ENCODE measurements at regions of chr10 and their contacts with region 1.

Region 1: GRCh38 chr10:78756604-78757349 is 312.0 kb upstream of the ZMIZ1 start:
- DNase-seq: peak; percentile 100
- ATAC-seq: peak; percentile 98
- H3K4me3 ChIP-seq: peak overlapping the region; percentile 4; the same call in 1 of the 2 replicates
- H3K27ac ChIP-seq: peak overlapping the region; percentile 73
- H3K4me1 ChIP-seq: peaks cover 28% of the 10 kb centered on the region
- H3K27me3 ChIP-seq: no peaks in the 10 kb centered on the region
- CTCF ChIP-seq: peak; percentile 39; the same call in 1 of the 2 replicates

Region 2: DNA sequence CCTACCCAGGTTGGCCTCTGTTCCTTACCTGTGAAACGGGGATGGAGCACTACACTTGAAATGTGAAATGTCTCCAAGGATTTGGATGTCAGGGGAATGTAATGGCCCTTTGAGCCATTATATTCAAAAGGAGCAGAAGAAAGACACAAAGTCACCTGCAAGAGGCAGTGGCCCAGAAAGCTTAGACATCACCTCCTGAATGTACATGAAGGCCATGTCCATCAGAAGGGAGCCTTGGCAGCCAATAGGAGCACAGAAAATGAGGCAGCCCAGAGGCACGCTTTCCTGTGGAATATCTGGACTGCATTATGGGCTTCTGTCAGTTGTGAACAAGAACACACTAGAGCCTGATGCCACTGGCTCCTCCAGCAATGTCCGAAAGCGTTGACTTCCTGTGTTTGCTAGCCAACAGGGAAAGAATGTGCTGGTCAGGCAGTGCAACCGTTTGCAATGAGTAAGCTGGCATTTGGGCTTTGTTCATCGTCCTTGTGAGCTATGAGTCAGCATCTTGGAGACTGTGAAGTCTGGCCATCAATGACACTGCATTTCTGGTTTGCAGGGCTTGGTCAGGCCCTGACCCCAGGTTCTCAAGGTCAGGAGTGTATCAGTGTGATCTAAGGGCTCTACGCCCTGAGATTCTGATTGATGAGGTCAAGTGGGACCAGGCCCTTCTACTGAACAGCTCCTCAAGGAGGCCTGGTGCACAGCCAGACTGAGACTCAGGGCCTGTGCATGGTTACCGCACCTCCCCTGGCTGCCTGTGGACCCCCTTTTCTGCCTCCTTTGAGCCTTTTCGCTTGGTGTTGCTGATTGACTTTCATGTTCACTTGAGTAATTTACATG is 500.8 kb before region 1 on chr10:
- CTCF ChIA-PET with region 1: no interaction called
- POLR2A ChIA-PET with region 1: no interaction called
- intact Hi-C with region 1: loop called (anchors 10 kb)
- DNase-seq: peak; percentile 100
- ATAC-seq: peak; percentile 97
- H3K4me3 ChIP-seq: no peak overlapping the region
- H3K27ac ChIP-seq: peak overlapping the region; percentile 73
- H3K4me1 ChIP-seq: peaks cover 20% of the 10 kb centered on the region
- H3K27me3 ChIP-seq: no peaks in the 10 kb centered on the region
- CTCF ChIP-seq: no peak

Region 3: DNA sequence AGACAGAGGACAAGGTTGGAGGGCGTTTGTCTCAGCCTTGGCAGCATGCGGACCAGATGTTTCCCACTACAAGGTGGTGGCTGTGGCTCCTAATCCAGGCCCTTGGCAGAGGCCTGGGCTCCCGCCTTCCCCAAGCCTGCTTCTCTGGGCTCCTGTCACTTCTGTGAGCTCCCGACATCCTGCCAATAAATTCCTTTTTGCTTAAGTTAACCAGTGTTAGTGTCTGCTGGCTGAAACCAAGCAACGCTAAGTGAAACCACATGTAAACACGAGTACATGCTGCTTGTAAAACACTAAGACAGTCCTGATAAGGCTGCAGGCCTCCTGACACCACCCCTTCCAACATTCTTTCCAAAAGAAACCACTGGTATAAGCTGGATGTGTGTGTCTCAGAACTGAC is 48.4 kb after region 1 on chr10:
- CTCF ChIA-PET with region 1: no interaction called
- POLR2A ChIA-PET with region 1: no interaction called
- intact Hi-C with region 1: loop called (anchors 1 kb)
- DNase-seq: peak; percentile 100
- ATAC-seq: peak; percentile 90
- H3K4me3 ChIP-seq: no peak overlapping the region
- H3K27ac ChIP-seq: peak overlapping the region; percentile 40
- H3K4me1 ChIP-seq: peaks cover 59% of the 10 kb centered on the region
- H3K27me3 ChIP-seq: no peaks in the 10 kb centered on the region
- CTCF ChIP-seq: no peak